ENCODE measurements at regions of chr7 and their contacts with region 1.

Region 1: GRCh38 chr7:138865843-138866242 is 67.8 kb upstream of the ATP6V0A4 start:
- DNase-seq: peak in 1 of 2 experiments; percentile 51
- H3K4me3 ChIP-seq: no peak overlapping the region
- H3K27ac ChIP-seq: no peak overlapping the region
- H3K4me1 ChIP-seq: peaks cover 28% of the 10 kb centered on the region
- H3K27me3 ChIP-seq: no peaks in the 10 kb centered on the region
- CTCF ChIP-seq: peak; percentile 80

Region 2: DNA sequence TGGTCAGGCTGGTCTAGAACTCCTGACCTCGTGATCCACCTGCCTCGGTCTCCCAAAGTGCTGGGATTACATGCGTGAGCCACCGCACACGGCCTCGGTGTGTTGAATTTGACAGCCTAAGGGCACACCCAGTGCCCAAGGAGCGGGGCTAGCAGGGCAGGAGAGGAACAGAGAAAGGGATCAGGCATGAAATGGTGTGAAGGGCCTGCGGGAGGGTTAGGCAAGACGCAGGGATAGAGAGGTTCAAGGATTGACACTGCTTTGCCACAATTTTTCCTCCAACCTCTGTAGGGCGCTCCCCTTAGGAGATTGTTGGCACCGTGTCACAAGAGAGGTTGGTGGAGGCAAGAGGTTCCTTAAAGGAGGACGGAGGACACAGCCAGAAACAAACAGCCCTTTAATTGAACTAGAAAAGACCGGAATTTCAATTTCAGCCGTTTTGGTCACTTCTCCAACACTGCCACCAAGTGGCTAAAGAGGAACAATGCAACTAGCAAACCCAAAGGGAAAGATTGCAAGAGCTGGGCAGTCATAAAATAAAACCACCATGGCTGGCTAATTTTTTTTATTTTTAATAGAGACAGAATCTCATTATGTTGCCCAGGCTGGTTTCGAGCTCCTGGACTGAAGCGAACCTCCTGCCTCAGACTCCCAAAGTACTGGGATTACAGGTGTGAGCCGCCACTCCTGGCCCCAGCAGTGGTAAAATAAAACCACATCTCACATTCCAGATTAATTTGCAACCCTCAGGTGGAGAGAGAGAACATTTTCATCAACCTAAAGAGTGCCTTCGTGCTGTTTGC is 857.1 kb before region 1 on chr7:
- CTCF ChIA-PET with region 1: no interaction called
- POLR2A ChIA-PET with region 1: no interaction called
- intact Hi-C with region 1: loop called (anchors 2 kb)
- DNase-seq: peak; percentile 26 to 61
- H3K4me3 ChIP-seq: no peak overlapping the region
- H3K27ac ChIP-seq: no peak overlapping the region
- H3K4me1 ChIP-seq: no peaks in the 10 kb centered on the region
- H3K27me3 ChIP-seq: no peaks in the 10 kb centered on the region
- CTCF ChIP-seq: peak; percentile 96

Region 3: DNA sequence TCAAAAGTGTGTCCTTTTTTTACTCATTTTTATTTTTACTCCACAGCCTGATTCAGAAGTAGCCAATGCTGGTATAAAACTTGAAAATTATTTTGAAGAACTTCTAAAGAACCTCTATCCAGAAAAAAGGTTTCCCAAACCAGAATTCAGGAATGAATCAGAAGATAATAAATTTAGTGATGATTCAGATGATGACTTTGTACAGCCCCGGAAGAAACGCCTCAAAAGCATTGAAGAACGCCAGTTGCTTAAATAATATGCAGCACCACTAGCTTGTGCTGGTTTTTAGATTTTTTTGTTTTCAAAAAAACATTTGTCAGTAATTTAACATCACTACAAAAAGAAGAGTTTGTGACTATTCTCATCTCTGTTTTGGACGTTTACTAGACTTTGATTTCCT is 281.1 kb before region 1 on chr7:
- CTCF ChIA-PET with region 1: no interaction called
- POLR2A ChIA-PET with region 1: no interaction called
- intact Hi-C with region 1: loop called (anchors 10 kb)
- DNase-seq: no peak
- H3K4me3 ChIP-seq: no peak overlapping the region
- H3K27ac ChIP-seq: no peak overlapping the region
- H3K4me1 ChIP-seq: no peaks in the 10 kb centered on the region
- H3K27me3 ChIP-seq: no peaks in the 10 kb centered on the region
- CTCF ChIP-seq: no peak

Region 4: DNA sequence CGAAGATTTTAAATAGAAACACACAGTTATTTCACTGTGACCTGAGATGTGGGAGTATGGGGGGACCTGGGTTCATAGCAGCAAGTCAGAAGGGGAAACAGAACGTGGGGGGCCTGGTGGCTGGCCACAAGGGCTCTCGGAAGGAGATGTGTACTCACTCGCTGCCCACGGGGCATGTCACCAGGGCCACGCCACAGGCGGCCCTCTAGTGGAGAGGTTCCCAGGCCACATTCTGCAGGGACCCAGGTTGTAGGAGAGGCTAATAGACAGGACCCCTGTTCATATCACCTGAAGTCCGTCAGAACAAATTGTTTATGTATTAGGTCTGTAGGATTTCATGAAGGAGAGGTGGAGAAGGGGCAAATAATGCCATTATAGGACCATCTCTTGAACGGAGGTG is 139.6 kb before region 1 on chr7:
- CTCF ChIA-PET with region 1: no interaction called
- POLR2A ChIA-PET with region 1: no interaction called
- intact Hi-C with region 1: no loop called
- DNase-seq: no peak
- H3K4me3 ChIP-seq: no peak overlapping the region
- H3K27ac ChIP-seq: no peak overlapping the region
- H3K4me1 ChIP-seq: no peaks in the 10 kb centered on the region
- H3K27me3 ChIP-seq: no peaks in the 10 kb centered on the region
- CTCF ChIP-seq: 0 out of 2 replicates have a peak, but pooled peaks have one; percentile 31

Region 5: GRCh38 chr7:138752568-138753518 is 113.0 kb before region 1 on chr7:
- CTCF ChIA-PET with region 1: no interaction called
- POLR2A ChIA-PET with region 1: interaction called, 3 read pairs
- intact Hi-C with region 1: loop called (anchors 1 kb)
- DNase-seq: peak; percentile 97 to 100
- H3K4me3 ChIP-seq: no peak overlapping the region
- H3K27ac ChIP-seq: peak overlapping the region; percentile 95
- H3K4me1 ChIP-seq: peaks cover 73% of the 10 kb centered on the region
- H3K27me3 ChIP-seq: no peaks in the 10 kb centered on the region
- CTCF ChIP-seq: no peak